ENCODE measurements at regions of chr18 and their contacts with region 1.

Region 1: GRCh38 chr18:45874491-45875184 is 49.2 kb downstream of the SIGLEC15 start:
- DNase-seq: peak; percentile 88
- H3K4me3 Mint-ChIP-seq: peak overlapping the region; percentile 1
- H3K27ac Mint-ChIP-seq: peak overlapping the region; percentile 95
- H3K4me1 Mint-ChIP-seq: peaks cover 31% of the 10 kb centered on the region
- H3K27me3 Mint-ChIP-seq: no peaks in the 10 kb centered on the region

Region 2: DNA sequence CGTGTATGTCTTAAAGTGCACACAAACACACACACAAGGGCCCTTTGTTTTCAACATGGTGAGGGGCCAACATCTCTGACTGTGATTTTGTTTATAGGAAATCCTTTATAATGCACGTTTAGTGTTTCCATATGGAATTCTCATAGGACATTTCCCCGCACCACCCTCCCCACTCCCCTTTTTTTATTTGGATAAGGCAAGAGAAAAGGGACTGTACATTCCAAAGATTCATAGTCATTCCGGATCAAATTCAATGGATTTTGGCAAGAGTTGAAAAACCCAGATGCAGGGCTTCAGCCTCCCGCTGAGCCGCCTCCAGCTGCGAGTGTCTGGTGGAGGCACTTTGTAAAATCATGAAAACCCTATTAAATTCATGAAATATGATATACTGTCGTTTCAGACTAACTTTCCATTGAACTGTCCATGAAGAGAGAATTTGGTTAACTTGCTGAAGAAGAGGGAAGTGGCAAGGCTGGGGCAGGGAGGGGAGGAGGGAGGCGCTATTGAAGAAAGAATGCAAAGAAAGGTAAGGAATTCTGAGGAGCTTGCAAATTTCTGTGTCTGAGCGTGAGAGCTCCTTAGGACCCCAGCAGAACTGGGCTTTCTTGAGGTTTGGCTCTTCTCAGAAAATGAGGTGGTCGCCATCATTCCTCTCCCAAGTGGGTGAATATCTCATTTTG is 285.1 kb before region 1 on chr18:
- CTCF ChIA-PET with region 1: no interaction called
- intact Hi-C with region 1: no loop called
- DNase-seq: no peak
- H3K4me3 Mint-ChIP-seq: no peak overlapping the region
- H3K27ac Mint-ChIP-seq: no peak overlapping the region
- H3K4me1 Mint-ChIP-seq: no peaks in the 10 kb centered on the region
- H3K27me3 Mint-ChIP-seq: no peaks in the 10 kb centered on the region

Region 3: GRCh38 chr18:45664824-45665763 is 209.5 kb before region 1 on chr18:
- CTCF ChIA-PET with region 1: interaction called, 128 read pairs
- intact Hi-C with region 1: loop called (anchors 1 kb)
- DNase-seq: peak; percentile 82
- H3K4me3 Mint-ChIP-seq: no peak overlapping the region
- H3K27ac Mint-ChIP-seq: no peak overlapping the region
- H3K4me1 Mint-ChIP-seq: peaks cover 52% of the 10 kb centered on the region
- H3K27me3 Mint-ChIP-seq: no peaks in the 10 kb centered on the region

Region 4: GRCh38 chr18:45690975-45691815 is 183.4 kb before region 1 on chr18:
- CTCF ChIA-PET with region 1: interaction called, 77 read pairs
- intact Hi-C with region 1: loop called (anchors 1 kb)
- DNase-seq: peak; percentile 89
- H3K4me3 Mint-ChIP-seq: no peak overlapping the region
- H3K27ac Mint-ChIP-seq: no peak overlapping the region
- H3K4me1 Mint-ChIP-seq: peaks cover 36% of the 10 kb centered on the region
- H3K27me3 Mint-ChIP-seq: no peaks in the 10 kb centered on the region

Region 5: GRCh38 chr18:45863469-45863868 is 11.2 kb before region 1 on chr18:
- CTCF ChIA-PET with region 1: interaction called, 13 read pairs
- intact Hi-C with region 1: loop called (anchors 1 kb)
- DNase-seq: no peak
- H3K4me3 Mint-ChIP-seq: no peak overlapping the region
- H3K27ac Mint-ChIP-seq: no peak overlapping the region
- H3K4me1 Mint-ChIP-seq: peaks cover 10% of the 10 kb centered on the region
- H3K27me3 Mint-ChIP-seq: no peaks in the 10 kb centered on the region

Region 6: GRCh38 chr18:45967007-45967706 is 92.5 kb after region 1 on chr18 and contains the start of gene EPG5:
- CTCF ChIA-PET with region 1: interaction called, 4 read pairs
- intact Hi-C with region 1: loop called (anchors 2 kb)
- DNase-seq: peak; percentile 98
- H3K4me3 Mint-ChIP-seq: peak within 1 kb of the TSS; percentile 97
- H3K27ac Mint-ChIP-seq: peak within 1 kb of the TSS; percentile 86
- H3K4me1 Mint-ChIP-seq: peaks cover 33% of the 10 kb centered on the region
- H3K27me3 Mint-ChIP-seq: no peaks in the 10 kb centered on the region
- total RNA-seq, gene EPG5: 18.3 to 21.2 TPM